CD8-positive, alpha-beta T cell (primary cell): ENCODE measurements at regions of chr16 and their contacts with region 1.

Region 1: GRCh38 chr16:67561824-67562525 is 351 bp upstream of the CTCF start:
- DNase-seq: peak; percentile 93 to 99 (median 96)
- ATAC-seq: peak; percentile 77
- H3K4me3 ChIP-seq: peak overlapping the region; percentile 65 to 73
- H3K4me3 Mint-ChIP-seq: peak overlapping the region; percentile 82
- H3K27ac ChIP-seq: peak overlapping the region; percentile 71 to 90
- H3K27ac Mint-ChIP-seq: peak overlapping the region; percentile 96
- H3K4me1 ChIP-seq: peaks cover 35% of the 10 kb centered on the region
- H3K4me1 Mint-ChIP-seq: peaks cover 53% of the 10 kb centered on the region
- H3K27me3 ChIP-seq: no peaks in the 10 kb centered on the region
- H3K27me3 Mint-ChIP-seq: no peaks in the 10 kb centered on the region
- CTCF ChIP-seq: no peak

Region 2: DNA sequence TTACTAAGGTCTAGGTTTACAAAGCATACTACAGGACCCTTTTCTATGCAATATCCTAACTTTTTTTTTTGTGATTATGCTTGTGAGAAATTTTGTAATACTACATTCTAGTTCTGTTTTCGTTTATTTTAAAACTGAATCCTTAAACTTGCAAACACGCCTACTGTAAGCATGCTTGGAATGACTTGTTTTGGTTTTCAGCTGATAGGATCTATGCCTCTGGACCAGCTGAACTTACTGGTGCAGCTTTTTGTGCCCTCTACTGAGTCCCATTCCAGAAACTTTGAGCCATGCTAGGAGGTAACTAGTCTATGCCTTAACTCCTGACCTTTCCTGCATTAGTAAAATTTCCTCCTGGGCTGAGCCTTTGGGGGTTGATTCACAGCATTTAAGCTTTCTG is 675.6 kb before region 1 on chr16:
- CTCF ChIA-PET with region 1: no interaction called
- POLR2A ChIA-PET with region 1: no interaction called
- intact Hi-C with region 1: no loop called
- DNase-seq: no peak
- ATAC-seq: no peak
- H3K4me3 ChIP-seq: no peak overlapping the region
- H3K4me3 Mint-ChIP-seq: no peak overlapping the region
- H3K27ac ChIP-seq: no peak overlapping the region
- H3K27ac Mint-ChIP-seq: no peak overlapping the region
- H3K4me1 ChIP-seq: peaks cover 3% of the 10 kb centered on the region
- H3K4me1 Mint-ChIP-seq: peaks cover 32% of the 10 kb centered on the region
- H3K27me3 ChIP-seq: no peaks in the 10 kb centered on the region
- H3K27me3 Mint-ChIP-seq: no peaks in the 10 kb centered on the region
- CTCF ChIP-seq: no peak

Region 3: DNA sequence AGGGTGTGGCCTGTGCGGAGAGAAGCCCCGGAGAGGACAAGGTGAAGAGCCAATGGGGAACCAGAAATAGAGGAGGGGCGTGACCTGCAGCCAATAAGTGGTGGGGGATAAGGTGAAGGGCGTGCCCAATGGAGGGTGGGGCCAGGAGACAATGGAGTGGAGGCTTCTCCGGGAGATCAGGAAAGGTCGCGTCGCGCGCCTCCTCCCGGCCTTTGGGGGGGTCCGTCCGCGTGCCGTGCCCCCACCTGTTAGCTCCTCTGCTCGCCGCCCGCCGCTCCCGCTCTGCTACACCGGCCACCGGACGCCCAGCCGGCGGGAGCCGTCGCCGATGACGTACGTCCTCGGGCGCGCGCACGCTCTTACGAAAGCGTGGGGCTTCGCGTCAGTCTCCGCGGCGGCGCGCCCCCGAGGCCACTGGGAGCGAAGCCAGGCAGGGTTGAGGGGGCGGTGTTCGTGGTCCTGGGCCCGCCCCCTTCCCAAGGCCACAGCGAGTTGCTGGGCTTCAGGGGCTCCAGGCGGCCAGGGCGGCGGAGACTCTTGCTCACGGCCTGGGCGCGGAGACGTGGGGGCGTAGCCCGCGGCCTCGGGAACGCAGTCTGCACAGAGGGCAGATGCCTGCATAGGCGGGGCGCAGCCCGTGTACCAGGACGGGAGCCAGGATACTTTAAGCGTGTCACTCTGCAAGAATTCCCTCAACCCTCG is 378.2 kb before region 1 on chr16 and contains the start of gene MATCAP1:
- CTCF ChIA-PET with region 1: no interaction called
- POLR2A ChIA-PET with region 1: no interaction called
- intact Hi-C with region 1: no loop called
- DNase-seq: peak; percentile 84 to 98 (median 92)
- ATAC-seq: peak; percentile 96
- H3K4me3 ChIP-seq: peak within 1 kb of the TSS; percentile 65 to 76
- H3K4me3 Mint-ChIP-seq: no peak within 1 kb of the TSS
- H3K27ac ChIP-seq: peak within 1 kb of the TSS; percentile 84 to 95
- H3K27ac Mint-ChIP-seq: no peak within 1 kb of the TSS
- H3K4me1 ChIP-seq: peaks cover 20% of the 10 kb centered on the region
- H3K4me1 Mint-ChIP-seq: peaks cover 17% of the 10 kb centered on the region
- H3K27me3 ChIP-seq: peaks cover 0 to 2% of the 10 kb centered on the region in 2 experiments
- H3K27me3 Mint-ChIP-seq: peaks cover 10% of the 10 kb centered on the region
- CTCF ChIP-seq: no peak
- total RNA-seq, gene MATCAP1: 7.7 to 8.0 TPM

Region 4: GRCh38 chr16:67537270-67537635 is 24.7 kb before region 1 on chr16:
- CTCF ChIA-PET with region 1: interaction called, 271 read pairs
- POLR2A ChIA-PET with region 1: interaction called, 17 read pairs
- intact Hi-C with region 1: no loop called
- DNase-seq: peak in 6 of 9 experiments; percentile 38 to 77 (median 58)
- ATAC-seq: peak; percentile 51
- H3K4me3 ChIP-seq: peak overlapping the region; percentile 83 to 85
- H3K4me3 Mint-ChIP-seq: peak overlapping the region; percentile 84
- H3K27ac ChIP-seq: peak overlapping the region; percentile 37 to 75
- H3K27ac Mint-ChIP-seq: peak overlapping the region; percentile 82
- H3K4me1 ChIP-seq: peaks cover 17% of the 10 kb centered on the region
- H3K4me1 Mint-ChIP-seq: peaks cover 33% of the 10 kb centered on the region
- H3K27me3 ChIP-seq: no peaks in the 10 kb centered on the region
- H3K27me3 Mint-ChIP-seq: no peaks in the 10 kb centered on the region
- CTCF ChIP-seq: no peak

Region 5: DNA sequence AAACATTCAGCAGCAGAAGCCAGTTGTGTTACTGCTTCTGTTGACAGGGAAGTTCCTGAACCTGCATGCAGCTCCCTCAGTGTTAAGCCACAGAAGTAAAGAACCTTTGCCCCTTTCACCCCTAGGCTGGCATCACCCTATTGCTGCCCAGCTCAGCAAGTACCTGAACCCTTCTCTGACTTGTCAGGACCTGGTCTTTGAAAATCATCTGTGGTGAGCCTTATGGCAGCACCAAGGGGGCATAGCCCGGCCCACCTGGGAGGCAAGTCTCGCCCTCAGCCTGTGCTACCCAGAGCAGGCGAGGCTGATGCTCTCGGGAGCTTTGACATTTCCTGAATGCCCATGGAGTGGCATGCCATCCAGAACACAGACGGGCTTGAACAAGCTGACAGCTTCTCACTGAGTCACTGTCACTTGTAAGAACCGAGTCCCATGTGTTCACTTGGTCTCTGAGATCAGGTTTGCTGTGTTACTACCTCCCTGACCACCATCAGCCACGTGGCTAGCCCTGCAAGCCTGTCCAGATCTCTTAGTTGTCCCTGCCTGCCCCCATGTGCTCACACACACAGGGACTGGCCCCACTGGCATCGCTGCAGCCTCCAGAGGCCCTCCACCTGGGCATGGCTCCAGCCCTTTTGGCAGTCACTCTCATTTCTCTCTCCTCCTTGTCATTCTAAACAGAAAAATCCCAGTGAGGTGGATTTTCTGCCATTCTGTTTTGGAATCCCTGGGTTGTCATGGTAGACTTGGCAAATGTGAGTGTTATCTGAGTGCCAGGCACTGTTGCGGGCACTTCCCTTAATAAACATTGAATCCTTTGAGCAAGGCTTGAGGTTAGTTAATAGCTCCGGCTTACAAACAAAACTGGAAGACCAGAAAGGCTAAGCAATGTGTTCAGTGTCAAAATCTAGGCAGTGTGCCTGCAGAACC is 80.1 kb after region 1 on chr16:
- CTCF ChIA-PET with region 1: interaction called, 46 read pairs
- POLR2A ChIA-PET with region 1: interaction called, 45 read pairs
- intact Hi-C with region 1: loop called (anchors 1 kb)
- DNase-seq: no peak
- ATAC-seq: no peak
- H3K4me3 ChIP-seq: no peak overlapping the region
- H3K4me3 Mint-ChIP-seq: no peak overlapping the region
- H3K27ac ChIP-seq: no peak overlapping the region
- H3K27ac Mint-ChIP-seq: no peak overlapping the region
- H3K4me1 ChIP-seq: peaks cover 26% of the 10 kb centered on the region
- H3K4me1 Mint-ChIP-seq: peaks cover 9% of the 10 kb centered on the region
- H3K27me3 ChIP-seq: no peaks in the 10 kb centered on the region
- H3K27me3 Mint-ChIP-seq: no peaks in the 10 kb centered on the region
- CTCF ChIP-seq: no peak

Region 6: GRCh38 chr16:67667817-67668494 is 106.0 kb after region 1 on chr16:
- CTCF ChIA-PET with region 1: interaction called, 18 read pairs
- POLR2A ChIA-PET with region 1: interaction called, 12 read pairs
- intact Hi-C with region 1: loop called (anchors 1 kb)
- DNase-seq: peak; percentile 64 to 91 (median 78)
- ATAC-seq: peak; percentile 90
- H3K4me3 ChIP-seq: peak overlapping the region in 1 of 2 experiments; percentile 84
- H3K4me3 Mint-ChIP-seq: peak overlapping the region; percentile 82
- H3K27ac ChIP-seq: peak overlapping the region in 1 of 2 experiments; percentile 38
- H3K27ac Mint-ChIP-seq: no peak overlapping the region
- H3K4me1 ChIP-seq: peaks cover 17% of the 10 kb centered on the region
- H3K4me1 Mint-ChIP-seq: peaks cover 16% of the 10 kb centered on the region
- H3K27me3 ChIP-seq: no peaks in the 10 kb centered on the region
- H3K27me3 Mint-ChIP-seq: no peaks in the 10 kb centered on the region
- CTCF ChIP-seq: peak; percentile 65

Region 7: DNA sequence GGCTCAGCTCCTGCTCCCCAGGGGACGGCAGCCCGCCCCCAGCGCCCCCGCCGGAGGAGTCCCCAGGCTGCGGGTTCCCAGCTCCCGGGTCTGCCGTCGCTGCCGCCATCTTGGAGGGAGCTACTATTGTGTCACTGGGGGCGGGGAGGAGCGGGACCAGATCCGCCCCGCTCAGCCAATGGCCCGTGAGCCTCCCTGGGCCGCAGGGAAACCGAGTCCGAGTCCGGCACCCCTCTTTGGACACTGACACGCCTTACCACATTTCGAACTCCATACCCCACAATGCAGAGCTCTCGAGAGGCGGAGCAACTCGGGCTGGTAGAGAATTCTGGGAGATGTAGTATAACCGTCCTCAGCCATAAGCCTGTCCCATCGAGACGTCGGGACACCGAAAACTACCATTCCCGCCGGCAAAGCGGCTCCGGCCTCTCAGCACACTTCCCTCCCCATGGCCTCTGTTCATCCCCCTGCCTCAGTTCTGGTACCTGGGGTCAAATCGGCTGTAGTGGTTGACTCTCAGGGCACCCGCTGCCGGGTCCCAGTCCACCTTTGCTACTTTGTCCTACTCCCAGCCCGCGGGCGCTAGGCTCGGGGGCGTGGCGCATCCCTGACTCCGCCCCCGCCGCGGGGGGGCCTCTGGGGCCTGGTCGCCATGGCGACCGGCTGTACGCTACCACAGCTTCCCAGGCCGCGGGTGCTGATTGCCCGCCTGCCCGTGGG is 244.6 kb after region 1 on chr16 and contains the starts of genes RANBP10 and TSNAXIP1:
- CTCF ChIA-PET with region 1: no interaction called
- POLR2A ChIA-PET with region 1: interaction called, 4 read pairs
- intact Hi-C with region 1: loop called (anchors 1 kb)
- DNase-seq: peak; percentile 92 to 99 (median 94)
- ATAC-seq: peak; percentile 91
- H3K4me3 ChIP-seq: peak within 1 kb of the TSS; percentile 89 to 96
- H3K4me3 Mint-ChIP-seq: peak within 1 kb of the TSS; percentile 95
- H3K27ac ChIP-seq: peak within 1 kb of the TSS; percentile 77 to 85
- H3K27ac Mint-ChIP-seq: peak within 1 kb of the TSS; percentile 91
- H3K4me1 ChIP-seq: peaks cover 35% of the 10 kb centered on the region
- H3K4me1 Mint-ChIP-seq: peaks cover 44% of the 10 kb centered on the region
- H3K27me3 ChIP-seq: no peaks in the 10 kb centered on the region
- H3K27me3 Mint-ChIP-seq: no peaks in the 10 kb centered on the region
- CTCF ChIP-seq: no peak
- total RNA-seq, gene RANBP10: 14.6 to 14.8 TPM
- total RNA-seq, gene TSNAXIP1: 0.31 to 0.41 TPM

Region 8: GRCh38 chr16:68085259-68086071 is 523.5 kb after region 1 on chr16 and contains the start of gene NFATC3:
- CTCF ChIA-PET with region 1: no interaction called
- POLR2A ChIA-PET with region 1: no interaction called
- intact Hi-C with region 1: loop called in 1 of 2 experiments (anchors 10 kb)
- DNase-seq: peak; percentile 98 to 100 (median 99)
- ATAC-seq: peak; percentile 81
- H3K4me3 ChIP-seq: peak within 1 kb of the TSS; percentile 87 to 97
- H3K4me3 Mint-ChIP-seq: peak within 1 kb of the TSS; percentile 85
- H3K27ac ChIP-seq: peak within 1 kb of the TSS; percentile 72 to 91
- H3K27ac Mint-ChIP-seq: peak within 1 kb of the TSS; percentile 98
- H3K4me1 ChIP-seq: peaks cover 64% of the 10 kb centered on the region
- H3K4me1 Mint-ChIP-seq: peaks cover 64% of the 10 kb centered on the region
- H3K27me3 ChIP-seq: no peaks in the 10 kb centered on the region
- H3K27me3 Mint-ChIP-seq: no peaks in the 10 kb centered on the region
- CTCF ChIP-seq: no peak
- total RNA-seq, gene NFATC3: 79.4 to 85.2 TPM